ENCODE measurements at regions of chr6 and their contacts with region 1.

Region 1: GRCh38 chr6:157013649-157014304 is 236.6 kb downstream of the ARID1B start:
- DNase-seq: no peak
- ATAC-seq: no peak
- H3K4me3 ChIP-seq: no peak overlapping the region
- H3K27ac ChIP-seq: no peak overlapping the region
- H3K4me1 ChIP-seq: peaks cover 2% of the 10 kb centered on the region
- H3K27me3 ChIP-seq: no peaks in the 10 kb centered on the region
- CTCF ChIP-seq: no peak
- POLR2A ChIP-seq: no peak
- RAD21 ChIP-seq: no peak

Region 2: GRCh38 chr6:156996265-156996664 is 17.5 kb before region 1 on chr6:
- CTCF ChIA-PET with region 1: no interaction called
- POLR2A ChIA-PET with region 1: no interaction called
- dilution Hi-C with region 1: no loop called
- in situ Hi-C with region 1: no loop called
- intact Hi-C with region 1: loop called (anchors 2 kb)
- DNase-seq: no peak
- ATAC-seq: no peak
- H3K4me3 ChIP-seq: no peak overlapping the region
- H3K27ac ChIP-seq: no peak overlapping the region
- H3K4me1 ChIP-seq: peaks cover 8% of the 10 kb centered on the region
- H3K27me3 ChIP-seq: no peaks in the 10 kb centered on the region
- CTCF ChIP-seq: no peak
- POLR2A ChIP-seq: no peak
- RAD21 ChIP-seq: no peak

Measured in IMR-90 (cell line).